GM13976 (cell line): ENCODE measurements at regions of chr20 and their contacts with region 1.

Region 1: DNA sequence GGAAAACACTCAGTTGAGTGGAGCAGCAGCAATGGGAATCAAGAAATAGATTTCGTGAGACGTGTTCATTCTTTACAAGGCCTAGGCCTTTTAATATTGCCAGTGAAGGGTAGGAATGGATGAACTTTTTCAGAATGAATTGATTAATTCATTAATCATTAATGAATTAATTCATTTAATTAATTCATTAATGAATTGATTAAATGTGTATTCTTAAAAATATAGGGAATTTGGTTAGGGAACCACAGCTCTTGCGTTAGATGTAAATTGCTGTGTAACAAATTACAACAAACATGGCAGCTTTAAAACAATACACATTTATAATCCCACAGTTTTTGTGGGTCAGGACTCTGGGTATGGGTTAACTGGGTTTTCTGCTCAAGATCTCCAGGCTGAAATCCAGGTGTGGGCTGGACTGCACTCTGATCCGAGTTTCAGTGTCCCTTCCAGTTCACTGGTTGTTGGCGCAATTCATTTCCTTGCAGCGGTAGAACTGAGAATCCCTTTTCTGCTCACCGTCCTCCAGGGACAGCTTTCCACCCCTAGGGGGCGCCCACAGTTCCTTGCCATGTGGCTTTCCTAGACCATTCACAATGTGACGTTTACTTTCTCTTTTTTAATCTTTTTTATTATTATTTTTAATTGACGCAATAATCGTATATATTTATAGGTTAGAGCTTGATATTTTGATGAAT is 32.8 kb upstream of the BCAS1 start:
- DNase-seq: peak; percentile 71
- CTCF ChIP-seq: peak; percentile 72

Region 2: GRCh38 chr20:53582574-53583351 is 520.5 kb before region 1 on chr20:
- in situ Hi-C with region 1: no loop called
- DNase-seq: no peak
- CTCF ChIP-seq: no peak

Region 3: GRCh38 chr20:54649511-54649962 is 546.3 kb after region 1 on chr20:
- in situ Hi-C with region 1: loop called (anchors 25 kb)
- DNase-seq: peak; percentile 59
- CTCF ChIP-seq: peak; percentile 84